ENCODE measurements at regions of chr2 and their contacts with region 1.

Region 1: GRCh38 chr2:20650880-20651730 is at the start of gene HS1BP3:
- DNase-seq: peak; percentile 100
- H3K4me3 ChIP-seq: peak within 1 kb of the TSS; percentile 76 to 93
- H3K27ac ChIP-seq: peak within 1 kb of the TSS; percentile 48 to 91
- H3K4me1 ChIP-seq: peaks cover 13 to 18% of the 10 kb centered on the region in 2 experiments; a peak in 2 of 4 replicates
- H3K27me3 ChIP-seq: peaks cover 9% of the 10 kb centered on the region; the same call in 1 of the 2 replicates
- CTCF ChIP-seq: peak; percentile 66
- EP300 ChIP-seq: 0 out of 4 replicates have a peak, but pooled peaks of 1 of the 2 experiments have one; percentile 23
- RAD21 ChIP-seq: peak; percentile 59
- polyA plus RNA-seq, gene HS1BP3: 18.7 and 20.1 TPM in 2 replicates

Region 2: GRCh38 chr2:20424300-20425290 is 226.5 kb before region 1 on chr2:
- CTCF ChIA-PET with region 1: interaction called, 14 read pairs
- POLR2A ChIA-PET with region 1: no interaction called
- DNase-seq: peak; percentile 57
- H3K4me3 ChIP-seq: 0 out of 4 replicates have a peak overlapping the region, but pooled peaks of 1 of the 2 experiments have one; percentile 3
- H3K27ac ChIP-seq: peak overlapping the region; percentile 3 to 57; a peak in 3 of 4 replicates
- H3K4me1 ChIP-seq: peaks cover 25 to 32% of the 10 kb centered on the region in 2 experiments
- H3K27me3 ChIP-seq: no peaks in the 10 kb centered on the region
- CTCF ChIP-seq: no peak
- EP300 ChIP-seq: peak; percentile 35 to 78; a peak in 3 of 4 replicates
- RAD21 ChIP-seq: no peak

Region 3: DNA sequence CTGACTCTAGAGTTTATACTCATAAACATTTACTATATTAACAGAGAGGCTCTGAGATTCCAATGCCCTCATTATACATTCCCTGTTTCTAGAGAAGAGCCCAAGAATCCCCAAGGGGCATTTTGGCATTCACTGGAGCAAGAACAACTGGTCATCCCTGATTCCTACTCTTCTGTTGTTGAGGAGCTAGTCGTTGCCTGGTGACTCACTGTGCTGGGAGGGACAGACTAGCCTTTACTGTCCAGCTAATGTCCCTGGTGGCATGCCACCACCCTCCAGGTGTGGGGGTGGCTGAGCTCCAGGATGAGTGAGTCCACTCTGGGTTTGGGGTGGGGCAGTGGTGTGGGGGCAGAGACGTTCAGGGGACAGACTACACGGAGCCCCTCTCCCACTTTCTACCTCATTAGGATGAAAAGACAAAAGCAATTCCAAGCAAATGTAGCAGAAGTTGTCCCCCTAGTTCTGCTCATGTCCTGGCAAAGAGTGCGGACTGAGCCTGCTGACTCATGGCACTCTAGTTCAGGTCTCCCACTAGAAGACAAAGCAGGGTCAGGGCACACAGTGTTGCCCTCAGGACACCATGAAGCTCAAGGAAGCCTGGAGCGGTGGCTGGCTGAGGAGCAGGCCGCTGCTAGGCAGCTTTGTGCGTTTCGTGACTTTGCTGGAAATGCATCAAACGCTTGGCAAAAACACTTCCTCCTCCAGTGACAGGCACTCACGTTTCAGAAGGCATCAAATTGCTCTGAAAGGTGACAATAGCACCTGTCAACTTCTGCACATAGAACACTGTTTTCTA is 154.8 kb before region 1 on chr2:
- CTCF ChIA-PET with region 1: no interaction called
- POLR2A ChIA-PET with region 1: no interaction called
- DNase-seq: no peak
- H3K4me3 ChIP-seq: no peak overlapping the region
- H3K27ac ChIP-seq: no peak overlapping the region
- H3K4me1 ChIP-seq: peaks cover 19 to 25% of the 10 kb centered on the region in 2 experiments
- H3K27me3 ChIP-seq: no peaks in the 10 kb centered on the region
- CTCF ChIP-seq: no peak
- EP300 ChIP-seq: no peak
- RAD21 ChIP-seq: no peak

Region 4: DNA sequence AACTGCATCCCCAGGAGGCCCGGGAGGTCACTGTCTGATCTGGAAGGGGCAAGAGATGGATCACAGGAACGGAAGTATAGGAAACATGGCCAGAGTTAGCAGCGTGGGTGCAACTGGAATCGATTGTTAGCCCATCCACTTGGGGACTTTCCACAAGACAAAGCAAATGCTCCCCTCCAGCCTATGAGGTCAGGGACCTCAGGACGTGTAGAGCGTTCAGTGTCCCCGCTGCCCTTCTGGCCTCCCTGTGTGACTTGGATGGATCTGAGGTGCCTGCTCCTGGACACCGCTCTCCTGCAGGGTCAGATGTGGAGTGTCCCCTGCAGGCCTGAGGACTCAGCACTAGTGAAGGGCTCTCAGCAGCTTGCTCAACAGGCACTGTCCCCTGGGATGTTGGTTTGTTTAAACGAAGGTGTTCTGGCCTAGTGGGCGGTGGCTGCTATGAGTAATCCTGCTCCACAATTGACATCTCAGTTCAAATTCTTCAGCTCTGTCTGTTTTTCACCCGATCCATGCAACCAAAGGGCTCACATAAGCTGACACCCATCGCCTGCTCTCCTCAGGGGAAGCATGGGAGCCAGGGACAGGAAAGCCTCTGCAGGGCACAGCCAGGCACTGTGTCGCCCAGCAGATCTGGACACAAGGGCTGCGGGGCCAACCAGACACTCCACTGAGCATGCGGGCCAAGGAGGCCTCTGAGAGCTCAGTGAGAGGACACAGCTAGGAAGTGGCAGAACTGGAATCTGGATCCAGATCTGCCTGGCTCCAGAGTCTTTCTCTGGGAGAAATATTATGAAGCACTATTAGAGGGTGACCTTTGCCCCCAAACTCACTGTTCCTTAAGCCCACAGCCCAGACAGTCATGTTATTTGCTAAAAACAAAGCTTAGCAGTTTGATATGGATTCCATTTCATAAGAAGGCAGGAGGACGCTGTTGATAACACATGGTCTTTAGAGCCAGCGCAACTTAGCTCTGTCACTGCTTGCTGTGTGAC is 125.8 kb before region 1 on chr2:
- CTCF ChIA-PET with region 1: interaction called, 10 read pairs
- POLR2A ChIA-PET with region 1: no interaction called
- DNase-seq: no peak
- H3K4me3 ChIP-seq: no peak overlapping the region
- H3K27ac ChIP-seq: no peak overlapping the region
- H3K4me1 ChIP-seq: peaks cover 0 to 30% of the 10 kb centered on the region in 2 experiments; a peak in 2 of 4 replicates
- H3K27me3 ChIP-seq: no peaks in the 10 kb centered on the region
- CTCF ChIP-seq: no peak
- EP300 ChIP-seq: no peak
- RAD21 ChIP-seq: no peak

Region 5: GRCh38 chr2:20635675-20636584 is 15.2 kb before region 1 on chr2:
- CTCF ChIA-PET with region 1: interaction called, 156 read pairs
- POLR2A ChIA-PET with region 1: no interaction called
- DNase-seq: peak; percentile 98
- H3K4me3 ChIP-seq: peak overlapping the region in 1 of 2 experiments; percentile 27; a peak in 1 of 4 replicates
- H3K27ac ChIP-seq: peak overlapping the region; percentile 9 to 72; a peak in 3 of 4 replicates
- H3K4me1 ChIP-seq: peaks cover 16 to 21% of the 10 kb centered on the region in 2 experiments
- H3K27me3 ChIP-seq: no peaks in the 10 kb centered on the region
- CTCF ChIP-seq: peak; percentile 98
- EP300 ChIP-seq: peak in 1 of 2 experiments; percentile 37; a peak in 2 of 4 replicates
- RAD21 ChIP-seq: peak; percentile 100

Region 6: DNA sequence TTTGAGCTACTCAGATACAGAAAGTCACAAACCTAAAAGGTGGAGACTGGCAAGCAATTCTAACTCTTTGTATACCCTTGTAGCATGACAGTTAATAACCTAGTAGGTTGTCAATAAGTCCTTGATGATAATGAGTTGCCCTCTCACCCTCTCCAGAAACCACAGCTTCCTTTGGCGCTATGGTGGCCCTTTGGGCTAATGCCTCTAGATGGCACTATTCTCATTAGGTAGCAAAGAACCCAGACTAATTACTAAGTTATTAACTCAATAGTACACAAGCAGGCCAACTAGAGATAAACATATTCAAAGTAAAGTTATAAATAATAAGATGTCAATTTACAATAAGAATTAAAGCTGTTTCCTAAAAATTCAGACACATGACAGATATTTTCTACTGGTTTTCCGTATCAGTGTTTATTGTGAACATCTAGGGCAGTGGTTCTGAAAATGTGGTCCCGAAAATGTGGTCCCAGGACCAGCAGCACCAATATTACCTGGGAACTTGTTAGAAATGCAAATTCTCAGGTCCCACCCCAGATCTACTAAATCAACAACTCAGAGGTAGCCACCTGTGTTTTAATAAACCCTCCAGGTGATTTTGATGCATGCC is 130.7 kb after region 1 on chr2:
- CTCF ChIA-PET with region 1: interaction called, 10 read pairs
- POLR2A ChIA-PET with region 1: no interaction called
- DNase-seq: peak; percentile 50
- H3K4me3 ChIP-seq: no peak overlapping the region; a peak in 1 of 4 replicates
- H3K27ac ChIP-seq: no peak overlapping the region
- H3K4me1 ChIP-seq: no peaks in the 10 kb centered on the region; a peak in 1 of 4 replicates
- H3K27me3 ChIP-seq: no peaks in the 10 kb centered on the region
- CTCF ChIP-seq: peak; percentile 91
- EP300 ChIP-seq: no peak
- RAD21 ChIP-seq: peak; percentile 83